PC-3 (cell line): ENCODE measurements at regions of chr5 and their contacts with region 1.

Region 1: DNA sequence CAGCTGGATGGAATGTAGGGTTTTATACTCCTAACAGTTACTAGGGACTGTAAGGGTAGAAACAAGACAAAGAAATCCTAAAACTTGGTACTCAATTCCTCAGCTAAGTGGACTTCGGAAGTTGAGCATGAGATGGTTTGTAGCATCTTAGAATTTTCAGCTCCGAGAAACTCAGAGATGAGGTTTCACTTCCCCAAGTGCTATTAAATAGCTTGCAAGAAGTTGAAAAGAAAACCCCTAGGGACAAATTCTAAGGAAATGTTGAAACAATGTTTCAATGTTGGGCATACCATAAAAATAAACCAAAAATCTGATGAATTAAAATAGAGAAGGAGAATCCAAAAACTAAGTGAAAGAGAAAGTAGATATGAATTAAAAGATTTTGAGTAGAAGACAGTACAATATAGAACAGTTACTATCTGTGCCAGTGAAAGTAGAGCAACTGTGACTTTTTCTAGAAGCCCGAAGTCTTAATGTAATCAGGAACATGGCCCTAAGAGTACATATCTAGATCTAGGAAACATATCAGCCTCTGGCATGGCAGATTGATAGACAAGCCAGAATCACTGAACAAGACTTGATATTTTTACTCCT is 308.6 kb upstream of the RGMB start:
- DNase-seq: no peak
- ATAC-seq: no peak
- H3K4me3 ChIP-seq: no peak overlapping the region
- H3K27ac ChIP-seq: no peak overlapping the region
- H3K4me1 ChIP-seq: peaks cover 25% of the 10 kb centered on the region
- H3K27me3 ChIP-seq: no peaks in the 10 kb centered on the region
- CTCF ChIP-seq: no peak

Region 2: GRCh38 chr5:98483301-98483685 is 18.5 kb after region 1 on chr5:
- CTCF ChIA-PET with region 1: no interaction called
- POLR2A ChIA-PET with region 1: no interaction called
- intact Hi-C with region 1: no loop called
- DNase-seq: no peak
- ATAC-seq: no peak
- H3K4me3 ChIP-seq: no peak overlapping the region
- H3K27ac ChIP-seq: no peak overlapping the region
- H3K4me1 ChIP-seq: no peaks in the 10 kb centered on the region
- H3K27me3 ChIP-seq: no peaks in the 10 kb centered on the region
- CTCF ChIP-seq: no peak

Region 3: GRCh38 chr5:98556712-98557111 is 91.9 kb after region 1 on chr5:
- CTCF ChIA-PET with region 1: no interaction called
- POLR2A ChIA-PET with region 1: no interaction called
- intact Hi-C with region 1: loop called (anchors 5 kb)
- DNase-seq: peak; percentile 37
- ATAC-seq: no peak
- H3K4me3 ChIP-seq: no peak overlapping the region
- H3K27ac ChIP-seq: no peak overlapping the region
- H3K4me1 ChIP-seq: peaks cover 11% of the 10 kb centered on the region
- H3K27me3 ChIP-seq: no peaks in the 10 kb centered on the region
- CTCF ChIP-seq: no peak

Region 4: DNA sequence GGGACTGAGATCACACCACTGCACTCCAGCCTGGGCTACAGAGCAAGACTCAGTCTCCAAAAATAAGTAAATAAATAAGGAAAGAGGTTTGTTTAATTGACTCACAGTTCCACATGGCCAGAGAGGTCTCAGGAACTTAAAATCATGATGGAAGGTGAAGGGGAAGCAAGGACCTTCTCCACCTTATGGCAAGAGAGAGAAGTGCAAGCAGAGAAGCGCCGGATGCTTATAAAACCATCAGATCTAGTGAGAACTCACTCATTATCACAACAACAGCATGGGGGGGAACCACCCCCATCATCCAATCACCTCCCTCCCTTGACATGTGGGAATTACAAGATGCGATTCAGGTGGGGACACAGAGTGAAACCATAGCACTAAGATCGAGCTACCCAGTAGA is 285.9 kb after region 1 on chr5:
- CTCF ChIA-PET with region 1: interaction called, 4 read pairs
- POLR2A ChIA-PET with region 1: no interaction called
- intact Hi-C with region 1: loop called (anchors 1 kb)
- DNase-seq: peak; percentile 46
- ATAC-seq: peak; percentile 16; the same call in 1 of the 2 replicates
- H3K4me3 ChIP-seq: no peak overlapping the region
- H3K27ac ChIP-seq: no peak overlapping the region
- H3K4me1 ChIP-seq: peaks cover 21% of the 10 kb centered on the region
- H3K27me3 ChIP-seq: no peaks in the 10 kb centered on the region
- CTCF ChIP-seq: peak; percentile 61

Region 5: GRCh38 chr5:98774192-98775033 is 309.6 kb after region 1 on chr5:
- CTCF ChIA-PET with region 1: no interaction called
- POLR2A ChIA-PET with region 1: no interaction called
- intact Hi-C with region 1: no loop called
- DNase-seq: peak; percentile 84
- ATAC-seq: peak; percentile 14
- H3K4me3 ChIP-seq: peak overlapping the region; percentile 89
- H3K27ac ChIP-seq: peak overlapping the region; percentile 62
- H3K4me1 ChIP-seq: peaks cover 38% of the 10 kb centered on the region
- H3K27me3 ChIP-seq: no peaks in the 10 kb centered on the region
- CTCF ChIP-seq: no peak